ENCODE measurements at regions of chr17 and their contacts with region 1.

Region 1: GRCh38 chr17:8189711-8190477 is at the start of gene BORCS6:
- DNase-seq: peak; percentile 78 to 98 (median 95)
- ATAC-seq: peak; percentile 70 to 75 (median 72)
- H3K4me3 ChIP-seq: peak within 1 kb of the TSS; percentile 74 to 77
- H3K4me3 Mint-ChIP-seq: no peak within 1 kb of the TSS
- H3K27ac ChIP-seq: peak within 1 kb of the TSS; percentile 89
- H3K27ac Mint-ChIP-seq: peak within 1 kb of the TSS; percentile 91 to 93
- H3K4me1 ChIP-seq: peaks cover 28 to 68% of the 10 kb centered on the region in 2 experiments
- H3K4me1 Mint-ChIP-seq: peaks cover 0 to 13% (median 11%) of the 10 kb centered on the region in 3 donors
- H3K27me3 ChIP-seq: no peaks in the 10 kb centered on the region
- H3K27me3 Mint-ChIP-seq: no peaks in the 10 kb centered on the region
- total RNA-seq, gene BORCS6: 6.7 to 21.3 (median 17.2) TPM

Region 2: GRCh38 chr17:8173056-8173870 is 16.6 kb before region 1 on chr17:
- CTCF ChIA-PET with region 1: interaction called in 1 of 2 experiments, 4 read pairs
- POLR2A ChIA-PET with region 1: interaction called, 6 to 18 read pairs
- DNase-seq: peak in 33 of 35 experiments; percentile 55 to 94 (median 77)
- ATAC-seq: peak; percentile 82 to 85 (median 82)
- H3K4me3 ChIP-seq: peak overlapping the region; percentile 54 to 57
- H3K4me3 Mint-ChIP-seq: peak overlapping the region; percentile 76 to 86 (median 81)
- H3K27ac ChIP-seq: peak overlapping the region; percentile 99
- H3K27ac Mint-ChIP-seq: peak overlapping the region; percentile 100
- H3K4me1 ChIP-seq: peaks cover 22 to 49% of the 10 kb centered on the region in 2 experiments
- H3K4me1 Mint-ChIP-seq: peaks cover 46 to 56% (median 55%) of the 10 kb centered on the region in 3 donors
- H3K27me3 ChIP-seq: no peaks in the 10 kb centered on the region
- H3K27me3 Mint-ChIP-seq: no peaks in the 10 kb centered on the region

Region 3: DNA sequence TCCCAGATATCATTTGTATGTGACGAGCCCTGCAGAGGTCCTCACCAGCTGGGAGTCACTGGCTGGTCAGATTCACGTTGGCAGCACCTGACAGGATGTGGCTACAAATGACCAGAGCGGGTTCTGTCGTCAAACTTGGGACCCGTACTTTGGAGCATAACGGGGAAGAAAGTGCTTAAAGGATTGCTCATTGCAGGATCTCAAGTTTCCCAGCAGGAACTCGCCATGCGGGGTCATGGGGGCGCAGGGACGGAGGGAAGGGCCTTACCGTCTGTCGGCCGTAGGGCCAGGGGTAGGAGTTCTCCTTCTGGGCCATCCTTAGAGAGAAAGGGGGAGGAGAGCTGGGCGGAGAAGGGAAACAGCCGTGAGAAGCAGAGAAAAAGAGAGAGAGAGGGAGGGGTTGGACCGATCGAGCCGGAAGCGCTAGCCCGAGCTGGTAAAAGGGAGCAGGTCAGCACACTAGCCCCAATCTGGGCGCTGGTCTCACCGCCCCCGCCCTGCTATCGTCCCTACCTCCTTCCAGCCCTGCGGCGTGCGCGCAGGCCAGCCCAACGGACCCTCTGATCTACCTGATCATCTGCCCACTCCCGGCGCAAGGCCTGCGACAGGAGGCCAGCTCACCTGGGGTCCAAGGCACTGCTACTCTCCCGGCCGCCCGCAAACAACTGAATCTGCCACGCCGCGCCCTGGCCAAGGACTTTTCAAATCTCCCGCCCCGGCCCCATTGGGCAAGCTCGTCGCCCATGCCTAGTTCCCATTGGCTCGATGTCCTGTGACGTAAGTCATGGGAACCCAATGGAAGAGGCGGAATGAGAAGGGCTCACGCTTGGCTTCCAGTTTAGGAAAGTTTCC is 20.2 kb after region 1 on chr17 and contains the start of gene AURKB:
- CTCF ChIA-PET with region 1: interaction called in 1 of 2 experiments, 3 read pairs
- POLR2A ChIA-PET with region 1: interaction called, 8 to 10 read pairs
- DNase-seq: peak; percentile 74 to 98 (median 91)
- ATAC-seq: peak; percentile 98 to 100 (median 100)
- H3K4me3 ChIP-seq: peak within 1 kb of the TSS; percentile 59 to 78
- H3K4me3 Mint-ChIP-seq: peak within 1 kb of the TSS; percentile 84 to 88 (median 86)
- H3K27ac ChIP-seq: peak within 1 kb of the TSS; percentile 74
- H3K27ac Mint-ChIP-seq: peak within 1 kb of the TSS; percentile 79 to 89
- H3K4me1 ChIP-seq: peaks cover 2 to 17% of the 10 kb centered on the region in 2 experiments
- H3K4me1 Mint-ChIP-seq: peaks cover 15 to 23% (median 19%) of the 10 kb centered on the region in 3 donors
- H3K27me3 ChIP-seq: no peaks in the 10 kb centered on the region
- H3K27me3 Mint-ChIP-seq: no peaks in the 10 kb centered on the region
- total RNA-seq, gene AURKB: 1.0 to 2.7 (median 1.7) TPM

Region 4: GRCh38 chr17:8283356-8283755 is 93.5 kb after region 1 on chr17:
- CTCF ChIA-PET with region 1: interaction called in 1 of 2 experiments, 10 read pairs
- POLR2A ChIA-PET with region 1: no interaction called
- DNase-seq: no peak
- ATAC-seq: no peak
- H3K4me3 ChIP-seq: no peak overlapping the region
- H3K4me3 Mint-ChIP-seq: no peak overlapping the region
- H3K27ac ChIP-seq: peak overlapping the region; percentile 34
- H3K27ac Mint-ChIP-seq: peak overlapping the region; percentile 52 to 70
- H3K4me1 ChIP-seq: peaks cover 8 to 23% of the 10 kb centered on the region in 2 experiments
- H3K4me1 Mint-ChIP-seq: peaks cover 15 to 34% (median 19%) of the 10 kb centered on the region in 3 donors
- H3K27me3 ChIP-seq: no peaks in the 10 kb centered on the region
- H3K27me3 Mint-ChIP-seq: no peaks in the 10 kb centered on the region